Panc1 (cell line): ENCODE measurements at regions of chr2 and their contacts with region 1.

Region 1: DNA sequence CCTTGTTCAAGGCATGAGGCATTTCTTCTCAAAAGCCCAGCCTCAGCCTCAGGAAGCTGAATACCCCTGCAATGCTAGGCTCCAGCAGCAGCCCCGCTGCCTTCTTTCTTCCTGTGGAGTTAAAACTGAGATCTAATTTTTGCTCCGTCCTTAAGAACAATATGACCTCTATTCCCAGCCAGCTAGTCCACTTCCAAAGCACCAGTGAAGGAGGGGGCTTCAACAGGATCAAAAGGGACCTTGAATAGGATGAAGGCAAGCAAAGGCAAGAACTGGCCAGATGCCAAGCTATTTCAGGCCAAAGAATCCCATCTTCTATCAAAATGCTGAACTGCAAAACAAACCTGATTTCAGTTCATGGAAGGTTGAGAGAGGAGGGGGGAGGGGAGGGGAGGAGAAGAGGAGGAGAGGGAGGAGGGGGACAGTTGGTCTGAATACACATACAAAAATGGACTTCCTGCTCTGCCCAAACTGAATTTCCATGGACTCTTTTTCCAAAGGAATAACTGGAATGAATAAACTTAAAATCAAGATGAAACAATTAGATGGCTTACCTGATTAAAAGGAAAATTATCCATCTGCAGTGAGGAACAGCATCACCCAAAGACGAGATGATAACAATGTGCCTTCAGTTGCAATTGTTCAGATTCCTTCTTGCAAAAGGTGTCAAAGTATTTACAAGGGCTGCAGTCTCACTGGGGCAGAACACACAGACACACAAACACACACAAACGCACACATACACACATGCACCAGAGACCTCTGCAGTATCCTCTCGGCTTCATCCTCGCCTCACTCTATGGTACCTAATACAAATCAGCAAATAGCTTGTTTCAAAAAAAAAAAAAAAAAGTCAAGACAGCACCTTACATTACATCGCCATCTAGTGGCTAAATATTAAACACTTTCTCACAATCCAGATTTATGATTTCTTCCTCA is at the start of gene SCN1A:
- DNase-seq: peak; percentile 20
- ATAC-seq: no peak
- H3K4me3 ChIP-seq: no peak within 1 kb of the TSS
- H3K27ac ChIP-seq: no peak within 1 kb of the TSS
- H3K4me1 ChIP-seq: no peaks in the 10 kb centered on the region
- H3K27me3 ChIP-seq: peaks cover 3% of the 10 kb centered on the region
- CTCF ChIP-seq: peak; percentile 79
- total RNA-seq, gene SCN1A: not detected

Region 2: GRCh38 chr2:165953655-165954606 is 173.6 kb before region 1 on chr2 and contains the start of gene TTC21B:
- CTCF ChIA-PET with region 1: interaction called, 10 read pairs
- POLR2A ChIA-PET with region 1: no interaction called
- in situ Hi-C with region 1: no loop called
- intact Hi-C with region 1: loop called (anchors 1 kb)
- DNase-seq: peak; percentile 75
- ATAC-seq: peak; percentile 99
- H3K4me3 ChIP-seq: peak within 1 kb of the TSS; percentile 74 to 85
- H3K27ac ChIP-seq: peak within 1 kb of the TSS; percentile 75
- H3K4me1 ChIP-seq: peaks cover 15% of the 10 kb centered on the region
- H3K27me3 ChIP-seq: no peaks in the 10 kb centered on the region
- CTCF ChIP-seq: peak; percentile 82
- total RNA-seq, gene TTC21B: 12.4 TPM

Region 3: GRCh38 chr2:166057370-166058164 is 69.9 kb before region 1 on chr2:
- CTCF ChIA-PET with region 1: interaction called, 3 read pairs
- POLR2A ChIA-PET with region 1: no interaction called
- in situ Hi-C with region 1: no loop called
- intact Hi-C with region 1: loop called (anchors 1 kb)
- DNase-seq: no peak
- ATAC-seq: no peak
- H3K4me3 ChIP-seq: no peak overlapping the region
- H3K27ac ChIP-seq: no peak overlapping the region
- H3K4me1 ChIP-seq: no peaks in the 10 kb centered on the region
- H3K27me3 ChIP-seq: no peaks in the 10 kb centered on the region
- CTCF ChIP-seq: peak; percentile 49; the same call in 1 of the 2 replicates

Region 4: DNA sequence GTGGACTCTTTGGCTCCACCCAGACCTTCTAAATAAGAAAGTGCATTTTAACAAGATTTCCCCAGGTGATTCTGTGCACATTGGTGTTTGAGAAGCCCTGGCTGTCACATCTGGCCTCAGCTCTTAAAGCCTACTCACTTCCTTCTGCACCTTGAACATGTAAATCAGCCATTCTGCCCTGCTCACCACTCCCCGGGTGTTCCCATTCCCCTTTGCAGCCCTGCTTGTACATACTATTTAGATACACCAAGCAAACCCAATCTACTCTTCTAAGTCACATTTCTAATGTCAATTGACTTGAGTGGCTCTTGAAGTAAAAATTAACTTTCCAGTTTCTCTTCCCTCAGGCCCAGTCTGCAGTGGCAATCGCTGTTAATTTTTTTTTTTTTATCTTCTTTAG is 13.4 kb after region 1 on chr2:
- CTCF ChIA-PET with region 1: no interaction called
- POLR2A ChIA-PET with region 1: no interaction called
- in situ Hi-C with region 1: no loop called
- intact Hi-C with region 1: no loop called
- DNase-seq: no peak
- ATAC-seq: no peak
- H3K4me3 ChIP-seq: no peak overlapping the region
- H3K27ac ChIP-seq: no peak overlapping the region
- H3K4me1 ChIP-seq: no peaks in the 10 kb centered on the region
- H3K27me3 ChIP-seq: no peaks in the 10 kb centered on the region
- CTCF ChIP-seq: no peak